ENCODE measurements at regions of chr20 and their contacts with region 1.

Region 1: GRCh38 chr20:49219089-49219923 is at the start of gene DDX27:
- H3K4me3 ChIP-seq: peak within 1 kb of the TSS; percentile 71
- H3K27ac ChIP-seq: peak within 1 kb of the TSS; percentile 37; the same call in 1 of the 2 replicates
- H3K4me1 ChIP-seq: no peaks in the 10 kb centered on the region
- CTCF ChIP-seq: no peak

Region 2: DNA sequence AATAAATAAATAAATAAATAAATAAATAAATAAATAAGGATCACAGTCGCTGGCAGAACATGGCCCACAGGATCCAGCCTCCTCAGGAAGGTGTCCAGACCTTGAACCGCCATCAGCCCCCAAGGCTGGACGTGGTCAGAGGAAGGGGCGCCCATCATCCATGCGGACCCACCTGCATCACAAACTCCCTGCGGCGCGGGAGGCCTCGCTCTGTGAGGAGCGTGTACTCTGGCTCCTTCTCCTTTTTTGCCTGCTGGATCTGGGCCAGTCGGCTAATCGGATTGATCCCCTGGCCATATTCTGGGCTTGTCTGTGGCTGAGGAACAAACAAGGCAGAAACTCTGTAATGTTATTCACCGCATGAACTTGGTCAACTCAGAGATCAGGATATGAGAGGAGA is 96.4 kb before region 1 on chr20:
- CTCF ChIA-PET with region 1: interaction called, 14 read pairs
- POLR2A ChIA-PET with region 1: interaction called, 8 read pairs
- H3K4me3 ChIP-seq: no peak overlapping the region
- H3K27ac ChIP-seq: no peak overlapping the region
- H3K4me1 ChIP-seq: no peaks in the 10 kb centered on the region
- CTCF ChIP-seq: no peak

Region 3: GRCh38 chr20:49140834-49141233 is 78.5 kb before region 1 on chr20:
- CTCF ChIA-PET with region 1: interaction called, 101 read pairs
- POLR2A ChIA-PET with region 1: interaction called, 4 read pairs
- H3K4me3 ChIP-seq: no peak overlapping the region
- H3K27ac ChIP-seq: no peak overlapping the region
- H3K4me1 ChIP-seq: no peaks in the 10 kb centered on the region
- CTCF ChIP-seq: no peak

Region 4: DNA sequence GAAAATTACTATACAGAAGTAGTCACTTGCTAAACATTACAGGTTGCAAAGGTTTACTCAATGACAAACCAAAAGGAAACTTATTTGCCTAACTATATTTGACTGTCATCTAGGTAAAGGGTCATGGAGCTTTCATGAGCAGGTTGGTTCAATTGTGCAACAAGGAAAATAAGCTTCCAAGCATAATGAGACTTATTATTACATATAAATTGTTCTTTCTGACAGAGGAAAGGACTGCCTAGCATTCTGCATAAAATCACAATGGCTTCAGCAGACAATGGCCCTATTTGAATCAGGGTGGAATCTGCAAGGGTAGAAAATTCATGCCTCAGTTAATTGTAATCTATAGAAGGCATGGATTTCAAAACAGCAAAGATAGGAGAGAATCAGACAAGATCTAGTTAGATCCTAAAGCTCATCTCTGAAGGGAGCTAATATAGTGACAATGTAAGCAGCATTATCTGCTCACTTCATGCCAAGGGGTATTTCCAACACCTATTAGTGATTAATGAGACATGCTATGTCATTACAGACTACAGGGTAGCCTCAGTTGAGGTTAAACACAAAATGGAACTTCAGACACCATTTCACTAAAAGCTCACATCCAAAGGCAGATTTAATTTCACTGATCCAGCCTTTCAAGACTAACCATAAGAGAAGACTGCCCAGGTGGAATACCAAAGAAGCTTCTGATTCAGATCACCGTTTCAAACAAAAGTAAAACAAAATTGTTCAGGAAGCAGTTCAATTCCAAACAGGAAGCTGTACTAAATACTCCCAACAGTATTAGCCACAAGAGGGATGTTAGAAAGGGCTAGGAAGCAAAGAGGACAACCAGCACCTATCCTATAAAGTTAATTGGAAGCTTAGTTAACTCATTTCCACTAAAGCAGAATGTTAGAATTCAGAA is 39.7 kb before region 1 on chr20:
- CTCF ChIA-PET with region 1: interaction called, 27 read pairs
- POLR2A ChIA-PET with region 1: interaction called, 12 read pairs
- H3K4me3 ChIP-seq: no peak overlapping the region
- H3K27ac ChIP-seq: no peak overlapping the region
- H3K4me1 ChIP-seq: peaks cover 7% of the 10 kb centered on the region
- CTCF ChIP-seq: no peak

Region 5: DNA sequence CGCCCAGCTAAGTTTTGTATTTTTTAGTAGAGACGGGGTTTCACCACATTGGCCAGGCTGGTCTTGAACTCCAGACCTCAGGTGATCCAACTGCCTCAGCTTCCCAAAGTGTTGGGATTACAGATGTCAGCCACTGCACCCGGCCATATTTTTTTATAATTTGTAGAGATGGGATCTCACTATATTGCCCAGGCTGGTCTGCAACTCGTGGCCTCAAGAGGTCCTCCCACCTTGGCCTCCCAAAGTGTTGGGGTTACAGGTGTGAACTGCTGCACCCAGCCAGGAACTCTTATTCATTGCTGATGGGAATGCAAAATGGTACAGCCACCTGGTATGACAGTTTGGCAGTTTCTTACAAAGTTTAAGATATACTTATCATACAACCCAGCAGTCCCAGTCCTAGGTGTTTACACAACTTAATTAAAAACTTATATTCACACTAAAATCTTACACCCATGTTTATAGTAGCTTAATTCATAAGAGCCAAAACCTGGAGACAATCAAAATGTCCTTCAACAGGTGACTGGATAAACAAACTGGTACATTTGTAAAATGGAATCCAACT is 19.5 kb before region 1 on chr20:
- CTCF ChIA-PET with region 1: interaction called, 18 read pairs
- POLR2A ChIA-PET with region 1: interaction called, 9 read pairs
- H3K4me3 ChIP-seq: no peak overlapping the region
- H3K27ac ChIP-seq: no peak overlapping the region
- H3K4me1 ChIP-seq: no peaks in the 10 kb centered on the region
- CTCF ChIP-seq: no peak

Region 6: DNA sequence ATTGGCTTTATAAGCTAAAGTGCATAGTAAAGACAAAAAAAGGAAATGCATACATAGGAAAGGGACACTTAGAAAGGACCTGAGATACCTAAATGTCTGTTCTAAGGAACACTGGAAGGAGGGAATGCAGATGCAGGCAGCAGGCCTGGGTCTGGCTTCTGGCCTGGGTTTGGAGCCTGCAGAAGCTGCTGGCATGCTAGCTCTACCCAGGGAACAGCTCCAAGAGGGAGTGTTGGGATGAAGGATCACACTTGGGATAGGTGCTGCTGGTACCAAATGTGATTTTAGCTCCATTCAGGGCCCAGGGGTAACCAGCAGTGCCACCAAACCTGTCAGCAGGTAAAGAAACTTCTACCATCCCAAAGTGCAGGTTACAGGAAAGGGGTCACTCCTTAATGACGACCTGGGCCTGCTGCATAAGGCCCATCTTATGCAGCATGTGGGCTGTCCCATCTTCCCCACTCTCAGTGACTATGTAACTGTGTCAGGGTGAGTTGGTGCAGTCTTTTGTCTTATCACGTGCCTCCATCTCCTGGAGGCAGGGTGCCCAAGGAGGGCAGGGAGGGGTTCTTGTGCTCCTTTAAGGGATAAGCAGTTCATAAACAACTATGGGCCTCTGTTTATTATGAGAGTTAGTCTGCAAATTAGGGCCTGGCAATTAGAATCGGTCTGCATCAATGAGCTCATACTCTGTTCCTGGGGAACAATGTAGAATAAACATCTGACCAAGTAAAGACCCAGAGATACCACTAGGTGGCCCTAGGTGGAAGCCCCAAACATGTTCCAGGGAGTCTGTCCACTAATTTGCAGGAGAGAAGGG is 26.8 kb after region 1 on chr20:
- CTCF ChIA-PET with region 1: interaction called, 10 read pairs
- POLR2A ChIA-PET with region 1: interaction called, 3 read pairs
- H3K4me3 ChIP-seq: no peak overlapping the region
- H3K27ac ChIP-seq: no peak overlapping the region
- H3K4me1 ChIP-seq: no peaks in the 10 kb centered on the region; the same call in 1 of the 2 replicates
- CTCF ChIP-seq: peak; percentile 44; the same call in 1 of the 2 replicates

Region 7: GRCh38 chr20:49256261-49256660 is 37.0 kb after region 1 on chr20:
- CTCF ChIA-PET with region 1: no interaction called
- POLR2A ChIA-PET with region 1: no interaction called
- H3K4me3 ChIP-seq: no peak overlapping the region
- H3K27ac ChIP-seq: no peak overlapping the region
- H3K4me1 ChIP-seq: no peaks in the 10 kb centered on the region
- CTCF ChIP-seq: no peak